ENCODE measurements at regions of chr5 and their contacts with region 1.

Region 1: GRCh38 chr5:3595006-3595961 is at the start of gene IRX1:
- DNase-seq: no peak
- H3K4me3 ChIP-seq: no peak within 1 kb of the TSS
- H3K27ac ChIP-seq: no peak within 1 kb of the TSS
- H3K4me1 ChIP-seq: no peaks in the 10 kb centered on the region
- H3K27me3 ChIP-seq: peaks cover 67 to 85% of the 10 kb centered on the region in 2 experiments
- CTCF ChIP-seq: no peak
- POLR2A ChIP-seq: no peak
- total RNA-seq, gene IRX1: not detected in 2 replicates

Region 2: DNA sequence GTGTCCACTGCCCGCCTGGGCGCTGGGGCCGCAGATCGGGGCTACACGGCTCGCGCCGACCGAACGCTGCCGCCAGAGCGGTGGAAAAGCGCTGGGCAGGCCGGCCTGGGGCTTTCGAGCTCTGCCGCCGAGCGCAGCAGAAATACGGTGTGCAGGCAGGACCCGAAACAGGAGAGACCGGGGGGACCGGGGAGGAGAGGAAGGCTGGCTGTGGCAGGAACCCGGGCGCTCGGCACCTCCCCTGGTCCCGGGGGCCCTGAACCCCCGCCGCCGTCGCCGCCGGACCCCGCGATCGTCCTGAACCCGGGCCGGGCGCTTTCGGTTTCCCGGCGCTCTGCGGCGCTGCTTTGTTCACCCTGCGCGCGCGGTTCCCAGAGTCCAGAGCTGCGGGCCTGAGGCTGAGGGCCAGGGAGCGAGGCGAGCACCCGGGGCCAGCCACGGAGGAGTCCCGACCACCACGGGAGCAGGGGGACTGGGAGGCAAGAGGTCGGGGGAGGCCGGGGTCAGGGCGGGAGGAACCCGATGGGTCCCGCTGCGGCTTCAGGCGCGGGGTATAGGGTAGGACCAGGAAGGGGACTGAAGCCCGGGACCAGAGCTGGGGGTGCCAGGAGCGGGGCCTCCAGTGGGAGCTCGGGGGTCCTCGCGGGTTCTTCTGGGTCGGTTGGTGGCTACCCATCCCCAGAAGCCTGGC is 855.8 kb before region 1 on chr5:
- CTCF ChIA-PET with region 1: no interaction called
- POLR2A ChIA-PET with region 1: no interaction called
- dilution Hi-C with region 1: no loop called
- intact Hi-C with region 1: loop called (anchors 10 kb)
- DNase-seq: no peak
- H3K4me3 ChIP-seq: peak overlapping the region in 1 of 3 experiments; percentile 18
- H3K27ac ChIP-seq: no peak overlapping the region
- H3K4me1 ChIP-seq: no peaks in the 10 kb centered on the region
- H3K27me3 ChIP-seq: peaks cover 30 to 63% of the 10 kb centered on the region in 2 experiments
- CTCF ChIP-seq: no peak
- POLR2A ChIP-seq: no peak

Region 3: GRCh38 chr5:3401635-3402034 is 193.6 kb before region 1 on chr5:
- CTCF ChIA-PET with region 1: no interaction called
- POLR2A ChIA-PET with region 1: no interaction called
- dilution Hi-C with region 1: no loop called
- intact Hi-C with region 1: no loop called
- DNase-seq: no peak
- H3K4me3 ChIP-seq: no peak overlapping the region
- H3K27ac ChIP-seq: no peak overlapping the region
- H3K4me1 ChIP-seq: no peaks in the 10 kb centered on the region
- H3K27me3 ChIP-seq: no peaks in the 10 kb centered on the region
- CTCF ChIP-seq: no peak
- POLR2A ChIP-seq: no peak

Measured in endothelial cell of umbilical vein (primary cell).